Activated CD4-positive, alpha-beta T cell treated with anti-CD3 and anti-CD28 coated beads for 36 hours (primary cell): ENCODE measurements at regions of chr1 and their contacts with region 1.

Region 1: DNA sequence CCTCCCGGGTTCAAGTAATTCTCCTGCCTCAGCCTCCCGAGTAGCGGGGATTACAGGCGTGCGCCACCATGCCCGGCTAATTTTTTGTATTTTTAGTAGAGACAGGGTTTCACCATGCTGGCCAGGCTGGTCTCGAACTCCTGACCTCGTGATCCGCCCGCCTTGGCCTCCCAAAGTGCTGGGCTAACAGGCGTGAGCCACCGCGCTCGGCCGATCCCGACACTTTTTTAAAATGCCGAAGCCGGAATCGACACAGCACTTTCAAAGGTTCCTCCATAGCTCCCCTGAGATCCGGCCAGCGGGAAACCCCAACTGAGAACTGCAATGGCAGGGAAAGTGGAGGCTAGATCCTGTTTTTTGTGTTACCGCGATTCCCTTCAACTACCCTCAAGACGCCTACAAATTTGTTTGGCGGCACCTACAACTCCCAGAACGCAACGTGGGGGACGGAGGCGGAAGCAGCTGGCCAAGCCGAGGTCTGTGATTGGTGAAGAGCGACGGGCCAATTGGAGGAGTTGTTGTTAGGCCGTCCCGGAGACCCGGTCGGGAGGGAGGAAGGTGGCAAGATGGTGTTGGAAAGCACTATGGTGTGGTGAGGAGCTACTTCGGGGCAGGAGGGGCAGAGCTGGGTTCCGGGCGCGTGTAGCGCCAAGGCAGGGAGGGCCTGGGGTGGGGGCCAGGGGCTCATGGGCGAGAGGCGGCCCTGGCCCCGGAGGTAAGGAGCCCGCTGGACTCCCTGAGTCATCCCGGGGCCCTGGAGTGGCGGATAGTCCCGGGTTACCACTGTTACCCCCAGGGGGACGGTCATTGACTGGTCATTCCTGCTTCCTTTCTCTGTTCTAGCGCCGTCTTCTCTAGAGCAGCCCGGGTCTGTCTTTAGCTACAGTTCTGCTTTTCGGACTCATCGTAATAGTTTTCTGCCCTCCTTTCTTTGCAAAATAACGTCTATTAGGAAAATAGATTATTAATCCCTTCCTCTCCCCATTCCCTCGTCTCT is at the start of gene PSMD4:
- DNase-seq: peak; percentile 96
- ATAC-seq: peak; percentile 95
- H3K4me3 Mint-ChIP-seq: peak within 1 kb of the TSS; percentile 96
- H3K27ac Mint-ChIP-seq: peak within 1 kb of the TSS; percentile 96
- H3K4me1 Mint-ChIP-seq: peaks cover 27% of the 10 kb centered on the region
- H3K27me3 Mint-ChIP-seq: no peaks in the 10 kb centered on the region
- total RNA-seq, gene PSMD4: 187 to 243 TPM

Region 2: DNA sequence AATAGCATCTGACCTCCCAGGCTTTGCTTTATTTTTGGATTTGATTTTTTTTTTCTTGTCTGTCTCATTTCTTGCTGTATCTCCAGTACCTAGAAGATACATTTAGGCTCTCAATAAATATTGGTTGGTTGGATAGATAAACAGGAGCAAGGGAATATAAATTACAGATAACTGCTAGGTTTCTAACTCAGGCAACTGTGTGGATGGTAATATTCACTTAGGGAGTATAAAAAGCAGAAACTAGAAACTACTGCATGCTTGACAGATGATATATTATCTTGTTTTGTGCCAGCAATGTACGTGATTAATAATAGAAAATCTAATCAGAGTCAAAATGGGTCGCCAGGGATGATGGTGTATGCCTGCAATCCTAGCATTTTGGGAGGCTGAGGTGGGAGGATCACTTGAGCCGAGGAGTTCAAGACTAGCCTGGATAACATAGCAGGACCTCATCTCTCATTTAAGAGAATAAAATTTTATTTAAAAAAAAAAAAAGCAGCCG is 798.3 kb before region 1 on chr1:
- CTCF ChIA-PET with region 1: no interaction called
- POLR2A ChIA-PET with region 1: no interaction called
- intact Hi-C with region 1: no loop called
- DNase-seq: no peak
- ATAC-seq: no peak
- H3K4me3 Mint-ChIP-seq: no peak overlapping the region
- H3K27ac Mint-ChIP-seq: no peak overlapping the region
- H3K4me1 Mint-ChIP-seq: peaks cover 3% of the 10 kb centered on the region
- H3K27me3 Mint-ChIP-seq: no peaks in the 10 kb centered on the region

Region 3: DNA sequence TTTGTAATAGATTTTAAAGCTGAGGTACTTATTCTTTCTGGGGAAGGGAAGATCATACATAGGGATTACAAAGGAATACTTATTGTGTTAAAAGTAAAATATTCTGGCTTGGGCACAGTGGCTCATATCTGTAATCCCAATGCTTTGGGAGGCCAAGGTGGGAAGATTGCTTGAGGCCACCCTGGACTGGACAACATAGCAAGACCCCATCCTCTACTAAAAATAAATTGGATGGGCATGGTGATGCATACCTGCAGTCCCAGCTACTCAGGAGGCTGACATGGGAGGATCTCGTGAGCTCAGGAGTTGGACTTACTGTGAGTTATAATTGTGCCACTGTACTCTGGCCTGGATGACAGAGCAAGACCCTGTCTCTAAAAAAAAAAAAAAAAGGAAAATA is 156.4 kb before region 1 on chr1:
- CTCF ChIA-PET with region 1: interaction called, 33 read pairs
- POLR2A ChIA-PET with region 1: no interaction called
- intact Hi-C with region 1: loop called (anchors 1 to 2 kb)
- DNase-seq: no peak
- ATAC-seq: no peak
- H3K4me3 Mint-ChIP-seq: no peak overlapping the region
- H3K27ac Mint-ChIP-seq: no peak overlapping the region
- H3K4me1 Mint-ChIP-seq: no peaks in the 10 kb centered on the region
- H3K27me3 Mint-ChIP-seq: no peaks in the 10 kb centered on the region

Region 4: DNA sequence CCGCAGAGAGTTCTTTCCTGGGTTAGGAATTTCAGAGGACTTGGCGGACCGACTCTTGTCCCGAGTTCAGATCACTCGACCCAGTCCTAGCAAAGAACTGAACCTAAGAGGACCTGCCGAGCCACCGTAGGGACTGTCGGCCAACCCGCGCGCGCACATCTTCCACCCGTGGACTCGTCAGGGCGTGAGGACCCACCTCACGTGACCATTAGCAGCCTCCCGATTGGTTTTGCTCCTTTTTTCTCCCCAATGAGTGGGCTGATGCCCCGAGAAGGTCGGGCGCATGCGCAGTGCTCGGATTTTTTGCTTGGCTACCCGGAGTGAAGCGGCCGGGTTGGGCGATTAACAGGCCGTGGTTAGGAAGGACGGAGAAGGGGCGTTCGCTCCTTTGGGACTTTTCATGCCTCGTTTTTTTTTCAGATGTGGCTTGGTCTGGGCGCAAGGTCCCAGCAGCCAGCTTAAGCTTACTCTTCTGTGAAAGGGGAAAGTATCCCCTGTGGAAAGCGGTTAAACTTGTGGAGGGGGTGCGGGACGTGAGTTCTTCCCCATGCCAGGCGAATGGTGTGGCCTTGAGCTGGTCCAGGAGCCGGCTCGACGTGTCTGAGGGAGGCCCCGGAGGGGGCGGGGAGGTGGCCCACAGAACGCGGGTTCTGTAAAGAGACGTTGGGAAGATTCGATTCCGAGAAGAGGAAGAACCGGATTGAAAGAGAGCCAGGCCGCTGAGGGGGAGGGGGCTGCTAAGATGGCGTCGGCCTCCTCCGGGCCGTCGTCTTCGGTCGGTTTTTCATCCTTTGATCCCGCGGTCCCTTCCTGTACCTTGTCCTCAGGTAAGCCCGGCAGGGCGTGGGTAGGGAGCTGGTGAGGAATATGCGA is 56.0 kb before region 1 on chr1 and contains the start of gene PIP5K1A:
- CTCF ChIA-PET with region 1: interaction called, 9 read pairs
- POLR2A ChIA-PET with region 1: interaction called, 4 read pairs
- intact Hi-C with region 1: loop called (anchors 1 kb)
- DNase-seq: peak; percentile 100
- ATAC-seq: peak; percentile 90
- H3K4me3 Mint-ChIP-seq: peak within 1 kb of the TSS; percentile 98
- H3K27ac Mint-ChIP-seq: peak within 1 kb of the TSS; percentile 100
- H3K4me1 Mint-ChIP-seq: peaks cover 38% of the 10 kb centered on the region
- H3K27me3 Mint-ChIP-seq: no peaks in the 10 kb centered on the region
- total RNA-seq, gene PIP5K1A: 74.5 to 85.1 TPM

Region 5: DNA sequence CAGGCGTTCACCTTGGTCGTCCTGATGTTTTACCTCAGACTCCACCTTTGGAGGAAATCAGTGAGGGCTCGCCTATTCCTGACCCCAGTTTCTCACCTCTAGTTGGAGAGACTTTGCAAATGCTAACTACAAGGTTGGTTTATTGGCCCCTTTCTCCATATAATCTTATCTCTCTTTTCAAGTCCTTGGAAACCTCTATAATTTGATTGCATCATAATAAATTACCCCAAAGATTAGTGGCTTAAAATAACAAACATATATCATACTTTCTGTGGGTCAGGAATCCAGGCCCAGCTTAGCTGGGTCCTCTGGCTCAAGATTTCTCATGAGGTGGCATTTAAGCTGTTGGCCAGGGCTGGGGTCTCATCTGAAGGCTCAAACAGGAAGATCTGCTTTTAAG is 12.1 kb before region 1 on chr1:
- CTCF ChIA-PET with region 1: interaction called, 16 read pairs
- POLR2A ChIA-PET with region 1: no interaction called
- intact Hi-C with region 1: no loop called
- DNase-seq: no peak
- ATAC-seq: no peak
- H3K4me3 Mint-ChIP-seq: no peak overlapping the region
- H3K27ac Mint-ChIP-seq: peak overlapping the region; percentile 38
- H3K4me1 Mint-ChIP-seq: peaks cover 3% of the 10 kb centered on the region
- H3K27me3 Mint-ChIP-seq: no peaks in the 10 kb centered on the region

Region 6: GRCh38 chr1:151327223-151327902 is 72.8 kb after region 1 on chr1 and contains the start of gene PI4KB:
- CTCF ChIA-PET with region 1: interaction called, 3 read pairs
- POLR2A ChIA-PET with region 1: interaction called, 5 read pairs
- intact Hi-C with region 1: loop called in 1 of 2 experiments (anchors 1 kb)
- DNase-seq: peak; percentile 92
- ATAC-seq: peak; percentile 94
- H3K4me3 Mint-ChIP-seq: peak within 1 kb of the TSS; percentile 92
- H3K27ac Mint-ChIP-seq: peak within 1 kb of the TSS; percentile 95
- H3K4me1 Mint-ChIP-seq: peaks cover 30% of the 10 kb centered on the region
- H3K27me3 Mint-ChIP-seq: no peaks in the 10 kb centered on the region
- total RNA-seq, gene PI4KB: 53.0 to 54.5 TPM

Region 7: DNA sequence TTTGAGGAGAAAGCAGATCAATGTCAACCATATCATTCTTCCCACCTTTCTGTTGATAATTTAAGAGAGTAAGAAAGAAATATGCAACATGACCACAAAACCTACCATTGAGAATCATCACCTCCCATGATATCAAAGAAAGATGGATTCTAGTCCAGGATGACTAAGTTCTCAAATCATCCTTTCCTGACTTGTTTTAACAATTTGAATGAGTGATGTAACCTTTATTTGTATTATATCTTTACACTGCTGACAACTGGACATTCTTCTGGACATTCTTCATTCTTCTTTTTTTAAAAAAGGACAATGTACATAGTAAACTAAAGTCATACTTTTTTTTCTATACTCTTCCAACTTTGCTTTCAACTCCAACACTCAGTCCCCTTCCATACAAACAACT is 154.4 kb after region 1 on chr1:
- CTCF ChIA-PET with region 1: no interaction called
- POLR2A ChIA-PET with region 1: no interaction called
- intact Hi-C with region 1: no loop called
- DNase-seq: no peak
- ATAC-seq: no peak
- H3K4me3 Mint-ChIP-seq: no peak overlapping the region
- H3K27ac Mint-ChIP-seq: peak overlapping the region; percentile 1
- H3K4me1 Mint-ChIP-seq: no peaks in the 10 kb centered on the region
- H3K27me3 Mint-ChIP-seq: no peaks in the 10 kb centered on the region

Region 8: DNA sequence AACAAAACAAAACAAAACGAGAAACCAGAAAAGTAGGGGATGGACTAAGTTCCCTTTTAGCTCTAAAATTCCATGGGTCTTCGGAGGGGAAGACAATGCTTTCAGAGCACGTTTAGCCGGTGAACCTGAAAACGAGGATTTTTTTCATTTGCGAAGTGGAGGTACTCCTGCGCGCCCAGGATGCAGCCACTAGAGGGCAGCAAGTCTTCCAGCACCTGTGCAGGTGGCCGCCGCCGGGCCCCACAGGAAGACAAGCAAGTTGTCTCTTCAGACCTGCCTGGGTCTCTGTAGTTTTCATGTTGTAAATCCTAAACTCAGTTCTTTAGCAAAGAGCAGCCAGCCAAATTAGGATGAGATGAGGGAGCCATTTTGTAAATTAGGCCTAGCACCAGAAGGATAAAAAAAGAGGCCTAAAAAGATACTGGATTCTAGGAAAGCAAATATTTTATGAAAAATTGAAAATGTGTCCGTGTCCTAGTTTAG is 339.7 kb after region 1 on chr1:
- CTCF ChIA-PET with region 1: no interaction called
- POLR2A ChIA-PET with region 1: interaction called, 19 read pairs
- intact Hi-C with region 1: no loop called
- DNase-seq: peak; percentile 94
- ATAC-seq: peak; percentile 100
- H3K4me3 Mint-ChIP-seq: peak overlapping the region; percentile 53
- H3K27ac Mint-ChIP-seq: peak overlapping the region; percentile 29
- H3K4me1 Mint-ChIP-seq: peaks cover 9% of the 10 kb centered on the region
- H3K27me3 Mint-ChIP-seq: peaks cover 5% of the 10 kb centered on the region